Activated naive CD4-positive, alpha-beta T cell treated with anti-CD3 and anti-CD28 coated beads, Interleukin-2, amount 10 ng/mL, durations not matched to agents 7 days and 5 days (primary cell): ENCODE measurements at regions of chr5 and their contacts with region 1.

Region 1: GRCh38 chr5:66306105-66306843 is 162.2 kb downstream of the SREK1 start:
- DNase-seq: peak; percentile 48
- H3K4me3 Mint-ChIP-seq: no peak overlapping the region
- H3K27ac Mint-ChIP-seq: no peak overlapping the region
- H3K4me1 Mint-ChIP-seq: peaks cover 3% of the 10 kb centered on the region
- H3K27me3 Mint-ChIP-seq: peaks cover 17% of the 10 kb centered on the region

Region 2: DNA sequence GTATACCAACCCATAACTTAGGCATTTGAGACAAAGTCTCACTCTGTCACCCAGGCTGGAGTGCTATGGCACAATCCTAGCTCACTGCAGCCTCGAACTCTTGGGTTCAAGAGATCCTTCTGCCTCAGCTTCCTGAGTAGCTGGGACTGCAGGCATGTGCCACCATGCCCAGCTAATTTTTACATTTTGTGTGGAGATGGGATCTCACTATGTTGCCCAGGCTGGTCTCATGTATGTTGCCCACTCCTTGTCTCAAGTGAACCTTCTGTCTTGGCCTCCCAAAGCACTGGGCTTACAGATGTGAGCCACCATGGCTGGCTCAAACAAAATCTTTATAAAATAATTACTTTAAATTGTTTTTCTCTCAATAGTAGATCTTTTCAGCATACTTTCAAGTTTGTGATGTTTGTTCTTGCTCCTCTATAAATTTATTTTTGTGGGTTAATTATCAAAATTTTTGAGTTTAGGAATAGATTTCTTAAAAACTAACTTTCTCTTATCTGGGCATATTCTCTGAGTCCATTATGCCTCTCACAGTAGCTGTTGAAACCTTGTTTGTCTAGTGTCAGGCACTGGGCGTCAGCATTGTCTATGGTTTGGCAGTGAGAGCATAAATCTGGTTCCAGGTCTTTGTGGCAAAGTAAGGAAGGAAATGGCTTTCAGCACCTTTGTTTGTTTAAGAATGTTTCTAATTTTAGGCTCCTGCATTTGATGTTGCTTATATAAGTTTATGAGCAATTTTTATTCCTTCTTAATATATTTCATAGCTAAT is 545.6 kb before region 1 on chr5:
- CTCF ChIA-PET with region 1: interaction called, 15 read pairs
- DNase-seq: peak; percentile 80
- H3K4me3 Mint-ChIP-seq: no peak overlapping the region
- H3K27ac Mint-ChIP-seq: no peak overlapping the region
- H3K4me1 Mint-ChIP-seq: peaks cover 14% of the 10 kb centered on the region
- H3K27me3 Mint-ChIP-seq: no peaks in the 10 kb centered on the region

Region 3: DNA sequence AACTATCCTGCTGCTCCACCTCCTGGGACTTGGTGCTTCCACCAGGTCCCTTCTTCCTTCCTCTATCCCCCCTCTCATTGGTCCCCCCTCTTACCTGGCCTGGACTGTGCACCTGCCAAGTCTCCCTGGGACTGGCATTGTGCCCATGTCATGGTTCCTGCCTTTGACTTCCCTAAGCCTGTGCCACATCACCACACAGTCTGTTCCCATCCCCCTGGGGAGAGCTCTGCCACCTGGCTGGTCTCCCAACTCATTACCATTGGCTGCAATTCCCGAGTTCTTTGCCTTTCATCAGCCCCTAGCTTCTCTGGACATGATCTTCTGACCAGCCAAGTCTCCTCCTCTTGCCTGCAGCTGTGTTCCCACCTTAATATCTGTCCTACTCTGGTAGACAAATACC is 18.1 kb after region 1 on chr5:
- CTCF ChIA-PET with region 1: interaction called, 11 read pairs
- DNase-seq: no peak
- H3K4me3 Mint-ChIP-seq: no peak overlapping the region
- H3K27ac Mint-ChIP-seq: no peak overlapping the region
- H3K4me1 Mint-ChIP-seq: no peaks in the 10 kb centered on the region
- H3K27me3 Mint-ChIP-seq: peaks cover 21% of the 10 kb centered on the region

Region 4: GRCh38 chr5:66724349-66725139 is 418.3 kb after region 1 on chr5:
- CTCF ChIA-PET with region 1: interaction called, 11 read pairs
- DNase-seq: no peak
- H3K4me3 Mint-ChIP-seq: no peak overlapping the region
- H3K27ac Mint-ChIP-seq: no peak overlapping the region
- H3K4me1 Mint-ChIP-seq: no peaks in the 10 kb centered on the region
- H3K27me3 Mint-ChIP-seq: peaks cover 25% of the 10 kb centered on the region

Region 5: DNA sequence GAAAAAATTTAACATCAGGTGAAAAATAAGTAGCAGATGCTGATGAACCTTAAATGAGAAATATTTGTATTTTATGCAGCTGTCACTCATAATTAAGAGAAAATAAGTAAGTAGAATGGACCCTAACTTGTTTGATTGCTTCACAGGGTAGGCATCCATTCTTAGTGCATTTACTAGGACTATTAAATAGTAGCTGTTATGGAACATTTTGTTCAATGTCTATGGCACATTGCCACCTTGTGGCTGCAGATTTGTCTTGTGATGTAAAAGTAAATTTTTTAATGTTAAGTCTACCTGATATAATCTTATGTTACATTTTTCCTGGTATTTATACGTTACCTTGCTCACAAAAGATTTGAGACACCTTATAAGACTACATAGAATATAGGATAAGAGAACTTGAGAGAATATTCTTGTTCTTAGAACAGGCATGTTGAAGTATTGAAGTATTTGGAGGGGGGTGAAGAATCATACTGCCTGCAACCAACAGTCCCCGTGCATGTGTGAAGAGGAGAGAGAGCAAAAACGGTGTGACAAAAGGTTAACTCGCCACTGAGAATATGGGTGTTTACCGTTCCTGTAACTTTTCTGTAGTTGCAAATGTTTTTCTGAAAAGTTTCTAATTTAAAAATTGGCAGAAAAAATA is 451.0 kb after region 1 on chr5:
- CTCF ChIA-PET with region 1: interaction called, 60 read pairs
- DNase-seq: peak; percentile 50
- H3K4me3 Mint-ChIP-seq: no peak overlapping the region
- H3K27ac Mint-ChIP-seq: no peak overlapping the region
- H3K4me1 Mint-ChIP-seq: no peaks in the 10 kb centered on the region
- H3K27me3 Mint-ChIP-seq: peaks cover 12% of the 10 kb centered on the region